ENCODE measurements at regions of chr13 and their contacts with region 1.

Region 1: DNA sequence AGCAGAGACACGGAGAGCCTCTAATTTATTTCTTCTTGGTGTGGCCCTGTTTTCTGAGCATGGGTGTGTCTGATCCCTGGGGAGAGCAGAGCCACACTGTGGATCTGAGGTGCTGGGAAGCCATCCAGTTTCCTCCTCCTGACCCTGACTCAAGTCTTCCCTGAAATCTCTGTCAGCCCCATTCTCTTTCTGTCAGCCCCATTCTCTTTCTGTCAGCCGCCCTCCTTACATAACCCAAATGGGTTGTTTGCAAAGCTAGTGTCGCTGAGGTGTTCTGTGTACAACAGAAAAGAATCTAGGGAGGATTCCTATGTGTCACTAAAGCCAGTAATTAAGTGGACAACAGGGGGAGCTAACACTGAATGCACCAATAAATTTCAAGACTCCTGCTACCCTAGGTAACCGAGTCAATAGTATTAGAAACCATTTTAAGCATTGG is 50.2 kb downstream of the LRCH1 start:
- DNase-seq: peak; percentile 44 to 64
- H3K4me3 ChIP-seq: no peak overlapping the region
- H3K4me3 Mint-ChIP-seq: peak overlapping the region; percentile 22
- H3K27ac Mint-ChIP-seq: peak overlapping the region; percentile 88
- H3K4me1 ChIP-seq: peaks cover 93% of the 10 kb centered on the region
- H3K4me1 Mint-ChIP-seq: peaks cover 73% of the 10 kb centered on the region
- H3K27me3 ChIP-seq: no peaks in the 10 kb centered on the region
- H3K27me3 Mint-ChIP-seq: no peaks in the 10 kb centered on the region
- CTCF ChIP-seq: peak; percentile 54 to 60

Region 2: GRCh38 chr13:46473798-46474197 is 129.4 kb before region 1 on chr13:
- CTCF ChIA-PET with region 1: no interaction called
- POLR2A ChIA-PET with region 1: no interaction called
- intact Hi-C with region 1: loop called (anchors 5 kb)
- DNase-seq: peak; percentile 60 to 81
- H3K4me3 ChIP-seq: no peak overlapping the region
- H3K4me3 Mint-ChIP-seq: peak overlapping the region; percentile 52
- H3K27ac Mint-ChIP-seq: peak overlapping the region; percentile 80
- H3K4me1 ChIP-seq: peaks cover 38% of the 10 kb centered on the region
- H3K4me1 Mint-ChIP-seq: peaks cover 23% of the 10 kb centered on the region
- H3K27me3 ChIP-seq: no peaks in the 10 kb centered on the region
- H3K27me3 Mint-ChIP-seq: no peaks in the 10 kb centered on the region
- CTCF ChIP-seq: no peak

Region 3: DNA sequence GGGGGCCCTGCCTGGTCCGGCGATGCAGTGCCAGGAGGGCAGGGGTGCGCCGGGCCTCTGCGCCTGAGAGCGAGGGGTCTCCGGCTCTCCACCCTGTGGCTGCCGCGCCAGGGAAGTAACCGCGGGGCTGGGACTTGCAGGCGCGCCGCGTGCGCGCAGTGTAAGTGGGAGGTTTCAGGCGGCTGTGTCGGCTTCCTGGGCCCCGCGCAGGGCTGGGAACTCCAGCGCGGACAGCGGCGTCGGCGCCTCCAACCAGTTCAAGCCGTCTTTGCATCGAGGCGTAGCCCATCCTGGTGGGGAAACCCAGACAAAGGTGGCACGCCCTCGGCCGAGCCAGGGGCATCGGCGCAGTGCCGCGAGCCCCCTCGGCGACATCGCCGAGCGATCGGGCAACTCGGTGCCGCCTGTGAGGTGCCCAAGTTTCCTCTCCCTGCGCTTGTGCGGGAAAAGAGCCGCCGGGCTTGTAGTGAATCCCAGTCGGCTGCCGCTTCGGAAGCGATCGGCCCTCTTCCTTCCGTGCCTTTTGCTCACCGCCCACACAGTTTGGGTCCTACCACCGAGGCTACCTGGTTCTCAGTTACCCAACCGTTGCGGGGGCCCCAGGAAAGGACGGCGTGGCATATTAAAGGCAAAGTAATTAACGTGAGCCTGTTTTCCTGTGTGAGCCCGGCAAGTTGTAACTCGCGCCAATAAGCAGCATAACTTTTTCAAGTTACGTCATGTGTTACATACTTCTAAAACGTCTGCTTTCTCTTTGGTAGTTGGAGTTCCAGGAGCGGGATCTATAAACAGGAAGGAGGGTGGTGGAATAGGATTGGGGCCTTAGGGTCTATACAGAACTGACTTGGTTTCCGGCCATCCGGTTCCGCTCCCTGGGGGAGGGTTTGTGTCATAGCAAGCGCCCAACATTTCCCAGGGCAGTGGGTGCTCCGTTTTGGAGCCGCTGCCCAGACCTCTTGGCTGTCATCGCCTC is 49.0 kb before region 1 on chr13:
- CTCF ChIA-PET with region 1: interaction called, 4 read pairs
- POLR2A ChIA-PET with region 1: no interaction called
- intact Hi-C with region 1: loop called (anchors 1 kb)
- DNase-seq: peak; percentile 79 to 80
- H3K4me3 ChIP-seq: peak overlapping the region; percentile 99
- H3K4me3 Mint-ChIP-seq: peak overlapping the region; percentile 97
- H3K27ac Mint-ChIP-seq: peak overlapping the region; percentile 87
- H3K4me1 ChIP-seq: peaks cover 23% of the 10 kb centered on the region
- H3K4me1 Mint-ChIP-seq: peaks cover 33% of the 10 kb centered on the region
- H3K27me3 ChIP-seq: no peaks in the 10 kb centered on the region
- H3K27me3 Mint-ChIP-seq: no peaks in the 10 kb centered on the region
- CTCF ChIP-seq: peak; percentile 34 to 55

Region 4: GRCh38 chr13:46639033-46639981 is 36.1 kb after region 1 on chr13:
- CTCF ChIA-PET with region 1: no interaction called
- POLR2A ChIA-PET with region 1: no interaction called
- intact Hi-C with region 1: loop called (anchors 1 kb)
- DNase-seq: no peak
- H3K4me3 ChIP-seq: no peak overlapping the region
- H3K4me3 Mint-ChIP-seq: no peak overlapping the region
- H3K27ac Mint-ChIP-seq: no peak overlapping the region
- H3K4me1 ChIP-seq: peaks cover 59% of the 10 kb centered on the region
- H3K4me1 Mint-ChIP-seq: peaks cover 61% of the 10 kb centered on the region
- H3K27me3 ChIP-seq: no peaks in the 10 kb centered on the region
- H3K27me3 Mint-ChIP-seq: no peaks in the 10 kb centered on the region
- CTCF ChIP-seq: no peak

Region 5: DNA sequence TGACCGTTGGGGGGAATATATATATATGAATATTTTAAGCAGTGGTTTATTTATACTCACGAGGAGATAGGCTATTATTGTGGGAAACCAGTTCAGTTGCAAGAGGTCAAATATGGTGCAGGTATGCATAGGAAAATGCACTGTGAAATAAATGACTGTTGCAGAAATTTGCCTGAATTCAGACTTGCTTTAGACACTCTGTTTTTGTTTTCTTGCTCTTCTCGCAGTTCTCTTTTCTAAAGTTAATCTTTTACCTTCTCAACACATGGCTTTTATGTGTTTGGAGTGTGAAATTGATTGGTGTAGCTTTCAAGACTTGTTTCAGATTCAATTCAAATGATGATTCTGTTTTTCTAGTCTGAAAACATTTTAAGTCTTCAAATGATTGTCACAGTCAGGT is 59.5 kb after region 1 on chr13:
- CTCF ChIA-PET with region 1: interaction called, 5 read pairs
- POLR2A ChIA-PET with region 1: no interaction called
- intact Hi-C with region 1: loop called (anchors 1 kb)
- DNase-seq: no peak
- H3K4me3 ChIP-seq: no peak overlapping the region
- H3K4me3 Mint-ChIP-seq: no peak overlapping the region
- H3K27ac Mint-ChIP-seq: peak overlapping the region; percentile 80
- H3K4me1 ChIP-seq: peaks cover 93% of the 10 kb centered on the region
- H3K4me1 Mint-ChIP-seq: peaks cover 61% of the 10 kb centered on the region
- H3K27me3 ChIP-seq: no peaks in the 10 kb centered on the region
- H3K27me3 Mint-ChIP-seq: no peaks in the 10 kb centered on the region
- CTCF ChIP-seq: no peak

Region 6: DNA sequence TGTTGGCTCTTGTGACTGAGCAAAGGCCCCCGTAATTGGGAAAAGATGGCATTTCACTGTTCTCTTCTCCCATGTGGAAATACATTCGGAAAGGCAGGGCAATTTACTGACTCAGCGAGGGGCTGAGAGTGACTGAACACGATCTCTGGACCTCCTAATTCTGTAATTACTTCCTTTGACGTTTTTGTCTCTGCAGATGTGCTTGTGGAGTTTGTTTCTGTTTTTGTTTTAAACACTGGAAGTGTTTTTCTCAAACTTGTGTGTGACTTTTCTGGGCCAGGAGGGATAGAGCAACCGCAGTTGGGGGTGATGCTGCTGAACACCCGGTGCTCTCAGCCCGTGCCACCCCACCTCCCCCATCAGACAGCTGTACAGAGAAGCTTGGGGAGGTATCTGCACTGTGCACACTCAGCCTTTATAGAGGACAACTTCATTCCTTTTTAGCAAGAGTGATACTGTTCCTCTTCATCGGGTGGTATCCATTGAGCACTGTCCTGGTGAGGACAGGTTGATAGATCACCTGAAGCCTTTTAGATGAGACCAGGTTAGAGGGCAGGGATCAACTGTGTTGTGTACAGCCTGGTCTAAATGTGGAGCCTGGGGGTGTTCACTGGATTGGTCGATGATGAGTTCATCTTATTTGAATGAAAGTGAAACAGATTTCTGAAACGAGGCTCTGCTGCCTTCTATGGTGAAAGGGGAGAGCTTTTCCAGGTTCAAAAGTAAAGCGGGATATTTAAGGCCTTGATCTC is 76.4 kb after region 1 on chr13:
- CTCF ChIA-PET with region 1: interaction called, 3 read pairs
- POLR2A ChIA-PET with region 1: interaction called, 3 read pairs
- intact Hi-C with region 1: loop called (anchors 1 kb)
- DNase-seq: no peak
- H3K4me3 ChIP-seq: no peak overlapping the region
- H3K4me3 Mint-ChIP-seq: no peak overlapping the region
- H3K27ac Mint-ChIP-seq: no peak overlapping the region
- H3K4me1 ChIP-seq: peaks cover 59% of the 10 kb centered on the region
- H3K4me1 Mint-ChIP-seq: peaks cover 24% of the 10 kb centered on the region
- H3K27me3 ChIP-seq: no peaks in the 10 kb centered on the region
- H3K27me3 Mint-ChIP-seq: no peaks in the 10 kb centered on the region
- CTCF ChIP-seq: no peak

Measured in Caco-2 (cell line).